ENCODE measurements at regions of chr16 and their contacts with region 1.

Region 1: GRCh38 chr16:85821441-85822135 is 22.1 kb downstream of the COX4I1 start:
- DNase-seq: peak; percentile 69 to 91 (median 83)

Region 2: GRCh38 chr16:85781695-85782370 is 39.8 kb before region 1 on chr16:
- intact Hi-C with region 1: no loop called
- DNase-seq: peak; percentile 25 to 87 (median 69)

Region 3: DNA sequence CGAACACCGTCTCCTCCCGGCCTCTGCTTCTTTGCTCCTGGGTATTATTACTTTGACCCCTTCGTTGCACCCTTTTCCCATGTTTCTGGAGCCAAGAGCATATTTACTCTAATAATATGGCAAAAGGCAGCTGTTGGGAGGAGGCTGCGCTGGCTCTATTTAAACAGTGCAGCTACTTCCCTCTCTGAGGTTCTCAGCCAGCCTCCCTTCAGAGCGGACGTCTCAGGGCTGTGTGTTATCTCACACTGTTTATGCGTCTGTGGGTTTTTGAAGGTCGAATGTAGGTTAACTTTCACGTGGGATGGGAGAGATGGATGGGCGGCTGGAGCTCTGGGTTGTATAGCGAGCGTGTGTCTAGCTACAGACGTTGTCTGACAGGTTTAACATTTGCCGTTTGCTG is 23.2 kb after region 1 on chr16:
- intact Hi-C with region 1: no loop called
- DNase-seq: peak in 3 of 42 donors; percentile 9 to 13 (median 9)

Region 4: GRCh38 chr16:85986931-85987749 is 165.6 kb after region 1 on chr16:
- intact Hi-C with region 1: loop called (anchors 5 kb)
- DNase-seq: peak in 6 of 42 donors; percentile 31 to 59 (median 34)

Region 5: DNA sequence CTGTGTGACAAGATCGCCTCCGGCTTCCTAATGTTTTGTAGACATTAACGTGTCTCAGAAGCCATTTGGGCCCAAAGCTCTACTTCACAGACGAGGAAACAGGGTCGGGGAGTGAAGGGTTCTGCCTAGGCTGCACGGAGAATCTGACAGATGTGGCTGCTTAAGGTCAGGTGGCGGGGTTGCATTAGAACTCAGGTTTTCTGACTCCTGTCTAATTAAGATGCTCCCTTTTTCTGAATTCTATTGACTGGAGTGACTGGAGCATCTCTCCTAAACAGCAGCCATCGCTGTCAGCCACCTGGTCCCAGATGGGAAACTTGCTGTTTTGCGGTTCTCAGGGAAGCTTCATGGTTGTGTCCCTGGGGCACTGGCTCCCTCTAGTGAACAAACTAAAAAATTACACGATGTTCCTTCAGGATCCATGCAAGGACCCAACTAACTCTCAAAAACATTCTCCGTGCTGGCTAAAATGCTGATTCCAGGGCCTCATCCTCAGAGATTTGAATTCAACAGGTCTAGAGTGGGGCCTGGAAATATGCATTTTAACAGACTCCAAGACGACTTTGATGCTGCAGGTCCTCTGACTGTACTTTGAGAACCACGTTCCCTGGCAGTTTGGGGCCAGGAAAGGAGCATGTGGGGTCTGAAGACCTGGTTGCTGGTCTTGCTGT is 194.7 kb after region 1 on chr16:
- intact Hi-C with region 1: loop called (anchors 5 kb)
- DNase-seq: peak in 40 of 42 donors; percentile 23 to 82 (median 58)

Measured in head of caudate nucleus (tissue), 42 donors.